Right cardiac atrium (tissue), 5 donors: ENCODE measurements at regions of chr11 and their contacts with region 1.

Region 1: DNA sequence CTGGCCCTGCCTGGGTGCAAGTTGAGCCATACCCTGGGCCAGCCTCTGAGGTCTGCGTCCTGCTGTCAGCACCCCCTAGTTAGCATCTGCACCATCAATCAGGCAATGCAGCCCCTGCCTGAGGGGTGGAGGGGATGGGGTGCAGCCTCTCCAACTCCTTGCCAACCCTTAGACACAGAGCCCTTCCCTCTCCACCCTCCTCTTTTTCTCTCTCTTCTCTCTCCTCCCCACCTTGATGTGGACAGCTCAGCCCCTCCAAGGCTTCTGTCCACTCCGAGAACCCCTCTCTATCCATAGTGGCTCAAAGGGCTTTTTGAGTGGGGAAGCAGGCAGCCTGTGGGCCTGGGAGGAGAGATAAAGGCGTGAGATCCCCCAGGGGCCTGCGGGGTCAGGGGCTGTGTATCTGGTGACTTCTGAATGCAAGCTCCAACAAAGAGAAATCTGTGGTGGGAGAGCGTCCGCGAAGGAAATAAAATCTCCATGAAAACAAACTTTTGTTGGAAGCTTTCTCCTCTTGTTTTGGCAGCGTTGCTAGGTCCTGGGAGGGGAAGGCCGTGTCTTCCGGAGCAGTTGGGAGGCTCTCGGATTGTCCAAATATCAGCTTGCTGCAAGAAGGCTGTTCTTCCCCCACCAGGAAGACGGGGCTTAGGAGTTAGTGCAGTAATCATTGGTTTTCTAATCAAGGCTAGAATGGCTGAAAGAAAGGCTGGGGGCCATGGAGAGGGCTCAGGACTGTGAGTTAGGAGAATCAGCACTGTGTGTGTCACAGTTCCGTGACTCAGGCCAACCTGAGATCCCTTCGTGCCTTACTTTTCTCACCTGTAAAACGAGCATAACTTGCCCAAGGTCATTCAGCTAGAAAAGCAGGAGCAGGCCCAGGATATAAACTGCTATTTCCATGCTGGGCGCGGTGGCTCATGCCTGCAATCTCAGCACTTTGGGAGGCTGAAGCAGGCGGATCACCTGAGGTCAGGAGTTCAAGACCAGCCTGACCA is 50.3 kb downstream of the PKNOX2 start:
- DNase-seq: peak; percentile 45 to 85 (median 82)
- ATAC-seq: peak; percentile 83 to 91
- H3K4me3 ChIP-seq: no peak overlapping the region
- H3K27ac ChIP-seq: peak overlapping the region; percentile 46
- H3K4me1 ChIP-seq: peaks cover 12% of the 10 kb centered on the region
- H3K27me3 ChIP-seq: no peaks in the 10 kb centered on the region

Region 2: GRCh38 chr11:125170510-125171031 is 44.3 kb before region 1 on chr11:
- intact Hi-C with region 1: loop called in 3 of 4 experiments (anchors 5 to 10 kb)
- DNase-seq: peak; percentile 83 to 92 (median 91)
- ATAC-seq: peak; percentile 81 to 82
- H3K4me3 ChIP-seq: no peak overlapping the region
- H3K27ac ChIP-seq: peak overlapping the region; percentile 92
- H3K4me1 ChIP-seq: peaks cover 7% of the 10 kb centered on the region
- H3K27me3 ChIP-seq: no peaks in the 10 kb centered on the region